AG04449 (cell line): ENCODE measurements at regions of chr14 and their contacts with region 1.

Region 1: GRCh38 chr14:23120541-23121251 is 1.6 kb upstream of the CEBPE start:
- DNase-seq: no peak
- H3K4me3 ChIP-seq: no peak overlapping the region
- CTCF ChIP-seq: peak; percentile 99

Region 2: GRCh38 chr14:22791301-22791700 is 329.4 kb before region 1 on chr14:
- CTCF ChIA-PET with region 1: no interaction called
- POLR2A ChIA-PET with region 1: no interaction called
- DNase-seq: peak; percentile 50
- H3K4me3 ChIP-seq: no peak overlapping the region
- CTCF ChIP-seq: no peak

Region 3: DNA sequence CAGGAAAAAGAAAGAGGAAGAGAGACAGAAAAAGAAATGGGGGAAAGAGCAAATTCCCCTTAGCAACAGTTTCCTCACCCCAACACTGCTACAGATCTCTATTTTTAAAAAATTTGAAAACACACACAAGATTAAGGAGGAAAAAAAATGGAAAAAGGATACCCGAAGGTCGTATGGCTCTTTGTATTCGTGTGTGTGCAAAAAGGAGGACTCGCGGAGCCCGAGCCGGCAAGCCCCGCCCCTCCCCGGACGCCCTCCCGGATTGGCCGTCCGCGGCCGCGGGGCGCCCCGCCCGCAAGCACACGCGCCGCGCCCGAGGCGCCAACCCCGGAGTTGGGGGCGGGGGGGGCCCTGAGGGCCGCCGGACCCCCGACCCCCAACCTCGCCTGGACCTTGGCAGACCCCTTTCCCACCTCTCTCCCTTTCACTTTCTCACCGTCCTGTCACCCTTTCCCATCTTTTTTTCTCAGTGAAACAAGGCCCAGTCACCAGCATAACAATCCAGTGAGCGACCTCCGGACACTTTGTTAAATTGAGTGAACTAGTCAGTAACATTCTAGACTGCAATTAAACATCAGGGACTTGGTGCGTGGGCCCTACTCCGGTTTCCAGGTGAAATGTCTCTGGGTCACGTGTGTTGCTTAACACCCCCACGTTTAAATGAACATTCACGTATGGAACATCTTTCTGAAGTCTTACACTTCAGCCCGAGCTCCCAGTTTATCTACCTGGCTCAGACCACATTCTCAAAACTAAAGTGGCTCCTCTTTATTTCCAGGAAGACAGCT is 110.6 kb before region 1 on chr14 and contains the start of gene C14orf93:
- CTCF ChIA-PET with region 1: no interaction called
- POLR2A ChIA-PET with region 1: no interaction called
- DNase-seq: no peak
- H3K4me3 ChIP-seq: peak within 1 kb of the TSS; percentile 57
- CTCF ChIP-seq: no peak

Region 4: DNA sequence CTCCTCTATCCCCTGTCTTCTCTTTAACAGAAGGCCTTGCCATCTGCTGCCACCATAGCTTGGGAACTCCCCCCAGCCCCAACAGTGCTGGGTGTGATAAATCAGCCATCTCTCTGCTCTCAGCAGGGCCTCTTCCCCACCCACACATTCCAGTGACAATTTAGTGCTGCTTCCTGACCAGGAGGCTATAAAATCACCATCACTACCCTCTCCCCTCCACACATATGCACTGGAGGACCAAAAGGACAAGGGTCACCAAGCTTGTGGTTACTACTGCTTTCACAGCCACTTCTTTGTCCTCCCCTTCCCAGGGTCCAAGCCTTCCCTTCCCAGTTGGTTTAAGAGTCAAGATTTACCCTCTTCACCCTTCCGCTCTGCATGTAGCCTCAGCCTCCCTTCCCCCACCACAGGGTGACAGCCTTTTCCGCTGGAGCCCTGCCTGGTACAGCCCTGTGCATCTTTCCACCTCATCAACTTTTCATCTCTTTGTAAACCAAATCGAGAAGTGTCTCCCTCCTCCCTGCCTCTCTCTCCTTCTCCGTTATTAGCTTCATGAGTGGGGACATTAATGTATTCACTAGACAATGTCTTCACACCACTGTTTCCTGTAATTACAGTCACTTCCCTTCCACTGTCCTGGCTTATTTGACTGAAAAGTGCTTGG is 95.4 kb before region 1 on chr14:
- CTCF ChIA-PET with region 1: no interaction called
- POLR2A ChIA-PET with region 1: no interaction called
- DNase-seq: no peak
- H3K4me3 ChIP-seq: no peak overlapping the region
- CTCF ChIP-seq: no peak

Region 5: DNA sequence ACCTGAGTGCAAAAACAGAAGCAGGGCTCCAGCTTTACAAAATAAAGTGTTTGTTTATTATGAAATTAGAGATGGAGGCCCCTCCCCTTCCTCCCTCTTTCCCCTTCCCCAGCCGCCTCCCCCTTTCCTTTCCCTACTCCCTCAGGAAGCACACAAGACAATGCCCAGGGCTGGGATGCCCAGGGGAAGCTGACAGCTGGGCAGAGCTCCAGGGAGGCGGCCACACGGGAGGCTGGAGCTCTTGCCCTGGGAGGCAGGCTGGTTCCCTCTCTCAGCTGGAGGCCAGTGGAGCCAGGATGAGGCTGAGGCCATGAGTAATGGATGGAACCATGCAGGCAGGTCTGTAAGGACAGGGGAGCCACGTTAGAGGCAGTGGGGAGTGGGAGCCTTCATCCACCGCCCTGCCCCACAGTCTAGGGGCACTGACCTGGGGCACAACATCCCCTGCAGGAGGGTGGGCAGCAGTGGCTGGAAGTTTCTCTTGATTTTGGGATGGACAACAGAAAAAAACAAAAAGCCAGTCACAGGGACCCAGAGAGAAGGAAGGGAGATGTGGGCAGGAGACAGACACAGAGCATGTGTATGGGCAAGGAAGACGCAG is 73.6 kb before region 1 on chr14:
- CTCF ChIA-PET with region 1: no interaction called
- POLR2A ChIA-PET with region 1: no interaction called
- DNase-seq: no peak
- H3K4me3 ChIP-seq: no peak overlapping the region
- CTCF ChIP-seq: no peak

Region 6: GRCh38 chr14:23076785-23077408 is 43.8 kb before region 1 on chr14:
- CTCF ChIA-PET with region 1: interaction called, 214 read pairs
- POLR2A ChIA-PET with region 1: no interaction called
- DNase-seq: no peak
- H3K4me3 ChIP-seq: no peak overlapping the region
- CTCF ChIP-seq: no peak

Region 7: GRCh38 chr14:23141671-23142451 is 21.2 kb after region 1 on chr14:
- CTCF ChIA-PET with region 1: interaction called, 64 read pairs
- POLR2A ChIA-PET with region 1: no interaction called
- DNase-seq: no peak
- H3K4me3 ChIP-seq: no peak overlapping the region
- CTCF ChIP-seq: no peak

Region 8: GRCh38 chr14:23160924-23161538 is 40.3 kb after region 1 on chr14:
- CTCF ChIA-PET with region 1: interaction called, 23 read pairs
- POLR2A ChIA-PET with region 1: no interaction called
- DNase-seq: no peak
- H3K4me3 ChIP-seq: no peak overlapping the region
- CTCF ChIP-seq: no peak

Region 9: GRCh38 chr14:23195550-23196101 is 74.9 kb after region 1 on chr14:
- CTCF ChIA-PET with region 1: interaction called, 1,439 read pairs
- POLR2A ChIA-PET with region 1: no interaction called
- DNase-seq: no peak
- H3K4me3 ChIP-seq: no peak overlapping the region
- CTCF ChIP-seq: no peak

Region 10: GRCh38 chr14:23208324-23208723 is 87.6 kb after region 1 on chr14:
- CTCF ChIA-PET with region 1: interaction called, 41 read pairs
- POLR2A ChIA-PET with region 1: no interaction called
- DNase-seq: no peak
- H3K4me3 ChIP-seq: no peak overlapping the region
- CTCF ChIP-seq: no peak

Region 11: DNA sequence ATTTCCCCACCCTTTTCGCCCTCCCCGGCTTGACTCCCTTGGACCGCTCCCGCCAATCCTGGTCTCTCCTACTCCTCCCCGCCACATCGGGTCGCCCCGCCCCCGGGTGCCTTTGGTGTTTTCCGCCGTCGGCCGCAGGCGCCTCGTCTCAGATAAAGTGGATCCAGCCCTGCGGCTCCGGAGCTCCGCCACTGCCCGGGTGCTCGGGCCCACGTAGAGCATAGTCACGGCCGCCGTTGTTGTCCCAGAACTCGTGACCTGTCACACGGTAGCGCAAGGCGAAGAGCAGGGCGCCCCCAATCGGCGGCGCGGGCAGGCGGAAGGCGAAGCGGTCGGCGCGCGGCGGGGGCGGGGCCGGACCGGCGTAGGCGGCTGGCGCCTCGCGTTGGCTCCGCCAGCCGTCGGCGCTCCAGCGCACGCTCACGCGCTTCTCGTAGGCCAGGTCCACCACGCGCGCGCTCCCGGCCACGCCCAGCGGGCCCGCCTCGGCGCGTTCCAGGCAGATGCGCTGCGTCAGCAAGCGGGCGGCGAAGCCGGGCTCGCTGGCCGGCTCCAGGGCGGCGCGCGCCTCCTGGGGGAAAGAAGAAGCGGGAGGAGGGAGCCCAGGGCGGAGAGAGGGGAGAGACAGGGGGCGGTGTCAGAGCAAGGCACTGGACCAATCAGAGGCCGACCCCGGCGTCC is 180.7 kb after region 1 on chr14:
- CTCF ChIA-PET with region 1: interaction called, 16 read pairs
- POLR2A ChIA-PET with region 1: no interaction called
- DNase-seq: peak; percentile 78
- H3K4me3 ChIP-seq: peak overlapping the region; percentile 74
- CTCF ChIP-seq: peak; percentile 81